IMR-90 (cell line): ENCODE measurements at regions of chr15 and their contacts with region 1.

Region 1: DNA sequence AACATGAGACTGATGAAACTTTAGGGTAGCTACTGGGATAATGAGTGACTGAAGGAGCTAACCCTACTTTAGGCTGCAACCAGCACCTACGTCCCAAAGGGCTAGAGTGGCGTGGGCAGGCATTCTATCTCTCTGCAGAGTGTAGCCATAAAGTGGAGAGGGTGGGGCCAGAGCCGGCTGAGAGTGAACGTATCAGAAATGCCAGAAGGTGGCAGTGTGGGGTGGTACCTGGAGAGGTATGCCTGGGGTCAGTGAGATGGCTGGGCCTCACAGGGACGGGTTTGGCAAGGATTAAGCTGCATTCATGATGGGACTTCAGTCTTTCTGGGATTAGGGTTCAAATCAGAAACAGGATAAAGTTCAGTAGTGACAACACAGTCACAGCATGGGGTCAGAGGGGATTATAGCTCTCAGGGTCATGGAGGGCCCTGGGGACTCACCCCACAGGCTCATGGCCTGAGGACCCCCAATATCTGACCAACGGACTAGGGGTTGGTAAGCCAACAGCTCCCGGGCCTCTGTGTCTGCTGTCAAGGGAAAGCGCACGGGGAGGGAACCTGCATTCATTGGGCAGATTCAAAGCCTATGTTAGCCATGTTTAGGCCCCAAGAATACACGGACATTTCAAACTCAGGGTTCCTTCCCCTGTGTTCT is 86.5 kb upstream of the FOXB1 start:
- DNase-seq: peak; percentile 10
- ATAC-seq: peak; percentile 83
- H3K4me3 ChIP-seq: no peak overlapping the region
- H3K27ac ChIP-seq: no peak overlapping the region
- H3K4me1 ChIP-seq: no peaks in the 10 kb centered on the region
- H3K27me3 ChIP-seq: no peaks in the 10 kb centered on the region
- CTCF ChIP-seq: peak; percentile 36
- POLR2A ChIP-seq: no peak
- RAD21 ChIP-seq: peak; percentile 45

Region 2: DNA sequence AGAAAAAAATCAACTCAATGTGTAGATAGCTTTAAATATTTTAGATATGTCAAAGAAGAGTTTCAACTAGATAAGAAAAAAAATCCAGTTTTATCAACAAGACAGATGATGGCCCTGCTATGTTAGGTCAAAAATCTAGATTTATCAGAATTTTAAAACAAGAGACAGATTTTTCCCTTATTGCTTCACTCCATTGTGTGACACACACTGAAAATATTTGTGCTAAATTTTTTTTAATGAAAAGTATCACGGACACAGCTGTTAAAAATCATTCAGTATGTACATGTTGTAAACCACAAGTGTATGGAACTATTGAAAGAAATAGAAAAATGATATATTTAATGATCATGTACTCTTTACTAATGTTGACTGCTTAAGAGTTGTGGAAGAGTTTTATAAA is 130.1 kb after region 1 on chr15:
- CTCF ChIA-PET with region 1: no interaction called
- POLR2A ChIA-PET with region 1: no interaction called
- dilution Hi-C with region 1: no loop called
- in situ Hi-C with region 1: no loop called
- intact Hi-C with region 1: no loop called
- DNase-seq: no peak
- ATAC-seq: no peak
- H3K4me3 ChIP-seq: no peak overlapping the region
- H3K27ac ChIP-seq: no peak overlapping the region
- H3K4me1 ChIP-seq: no peaks in the 10 kb centered on the region
- H3K27me3 ChIP-seq: peaks cover 5% of the 10 kb centered on the region
- CTCF ChIP-seq: no peak
- POLR2A ChIP-seq: no peak
- RAD21 ChIP-seq: no peak

Region 3: GRCh38 chr15:60128000-60128376 is 210.4 kb after region 1 on chr15:
- CTCF ChIA-PET with region 1: no interaction called
- POLR2A ChIA-PET with region 1: no interaction called
- dilution Hi-C with region 1: no loop called
- in situ Hi-C with region 1: no loop called
- intact Hi-C with region 1: loop called (anchors 5 kb)
- DNase-seq: peak; percentile 6
- ATAC-seq: peak; percentile 31
- H3K4me3 ChIP-seq: peak overlapping the region; percentile 82
- H3K27ac ChIP-seq: peak overlapping the region; percentile 8; the same call in 1 of the 2 replicates
- H3K4me1 ChIP-seq: no peaks in the 10 kb centered on the region
- H3K27me3 ChIP-seq: peaks cover 8% of the 10 kb centered on the region; the same call in 1 of the 2 replicates
- CTCF ChIP-seq: no peak
- POLR2A ChIP-seq: no peak
- RAD21 ChIP-seq: no peak